Right ventricle myocardium inferior (tissue), 1 donor: ENCODE measurements at regions of chr13 and their contacts with region 1.

Region 1: DNA sequence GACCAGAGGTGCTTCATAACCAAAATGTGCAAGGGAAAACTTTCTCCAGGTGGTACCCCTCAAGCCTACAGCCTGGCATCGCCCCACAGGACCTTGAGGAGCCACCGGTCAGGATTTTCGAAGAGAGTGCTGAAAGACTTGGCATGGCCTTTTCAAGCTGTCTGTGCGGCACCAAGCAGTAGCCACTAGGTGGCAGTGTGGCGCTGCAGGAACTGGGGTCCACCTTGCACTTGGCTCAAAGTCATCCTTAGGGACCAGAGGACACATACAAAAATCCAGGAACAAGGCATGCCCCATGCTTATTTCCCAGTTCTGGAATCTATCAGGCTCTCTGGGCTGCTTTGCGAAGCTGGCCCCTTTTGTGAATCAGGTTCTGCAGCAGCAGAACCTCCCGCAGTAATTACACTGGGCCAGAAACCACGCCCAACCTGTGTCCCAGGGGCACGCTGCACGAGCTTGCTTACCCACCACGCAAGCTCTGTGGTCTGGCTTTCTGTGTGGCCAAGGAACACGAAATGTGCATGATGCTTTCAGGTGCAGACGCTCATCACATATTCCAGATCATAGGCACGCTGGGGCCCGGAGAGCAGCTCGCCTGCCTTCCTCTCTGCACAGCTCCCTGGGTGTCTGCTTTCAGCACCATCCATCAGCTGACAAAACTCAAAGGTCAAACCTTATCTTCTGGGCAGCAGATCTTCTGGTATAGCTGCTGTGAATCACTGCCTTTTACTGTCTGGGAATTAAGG is 87.2 kb downstream of the SLC7A1 start:
- DNase-seq: peak; percentile 90
- ATAC-seq: peak; percentile 87

Region 2: DNA sequence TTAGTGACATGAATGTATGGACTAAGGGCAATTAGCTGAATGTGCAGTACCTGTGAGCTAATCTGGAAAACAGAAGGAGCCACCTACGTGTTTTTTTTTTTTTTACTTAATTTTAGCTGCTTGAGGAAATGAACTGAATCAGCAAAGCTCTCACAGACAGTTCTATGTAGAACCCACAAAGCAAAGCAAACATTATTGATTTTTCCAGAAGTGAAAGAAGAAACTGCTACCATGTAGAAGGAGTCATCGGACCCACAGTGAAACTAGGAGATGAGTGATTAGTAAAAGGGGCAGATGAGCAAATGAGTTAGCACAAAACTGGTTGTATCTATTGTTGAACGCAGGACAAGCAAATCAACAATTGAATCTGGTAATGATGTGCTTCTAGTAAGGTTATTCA is 181.2 kb after region 1 on chr13:
- intact Hi-C with region 1: loop called (anchors 5 kb)
- DNase-seq: no peak
- ATAC-seq: no peak

Region 3: DNA sequence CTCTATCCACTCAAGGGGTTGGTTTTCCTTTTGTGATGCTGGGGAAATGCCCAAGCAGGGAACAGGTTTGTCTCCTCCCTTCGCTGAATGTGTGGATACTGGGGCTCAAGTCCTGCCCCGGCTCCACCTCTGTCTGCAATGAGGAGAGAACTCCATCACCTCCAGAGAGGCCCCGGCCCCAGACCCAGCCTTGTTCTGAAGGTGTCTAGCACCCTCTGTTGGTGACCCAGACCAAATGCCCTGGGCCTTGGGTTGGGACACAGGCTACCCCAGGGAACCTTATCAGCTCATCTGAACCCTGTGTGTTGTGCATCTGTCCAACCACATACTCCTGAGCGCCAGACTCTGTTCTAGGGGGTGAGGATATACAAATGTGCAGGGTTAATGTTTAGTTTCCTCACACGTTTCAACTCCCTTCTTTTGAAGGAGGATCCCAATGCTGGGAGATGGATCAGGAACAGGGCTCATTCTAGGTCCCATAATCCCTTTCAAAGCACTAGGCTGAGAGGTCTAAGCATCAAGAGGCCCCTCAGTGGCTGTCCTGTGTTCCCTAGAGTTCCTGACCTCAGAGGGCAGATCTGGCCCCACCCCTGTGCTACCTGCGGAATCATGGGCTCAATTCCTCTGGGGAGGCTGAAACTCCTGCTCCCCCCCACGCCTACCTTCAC is 199.7 kb after region 1 on chr13:
- intact Hi-C with region 1: loop called (anchors 1 kb)
- DNase-seq: peak; percentile 67
- ATAC-seq: peak; percentile 42

Region 4: DNA sequence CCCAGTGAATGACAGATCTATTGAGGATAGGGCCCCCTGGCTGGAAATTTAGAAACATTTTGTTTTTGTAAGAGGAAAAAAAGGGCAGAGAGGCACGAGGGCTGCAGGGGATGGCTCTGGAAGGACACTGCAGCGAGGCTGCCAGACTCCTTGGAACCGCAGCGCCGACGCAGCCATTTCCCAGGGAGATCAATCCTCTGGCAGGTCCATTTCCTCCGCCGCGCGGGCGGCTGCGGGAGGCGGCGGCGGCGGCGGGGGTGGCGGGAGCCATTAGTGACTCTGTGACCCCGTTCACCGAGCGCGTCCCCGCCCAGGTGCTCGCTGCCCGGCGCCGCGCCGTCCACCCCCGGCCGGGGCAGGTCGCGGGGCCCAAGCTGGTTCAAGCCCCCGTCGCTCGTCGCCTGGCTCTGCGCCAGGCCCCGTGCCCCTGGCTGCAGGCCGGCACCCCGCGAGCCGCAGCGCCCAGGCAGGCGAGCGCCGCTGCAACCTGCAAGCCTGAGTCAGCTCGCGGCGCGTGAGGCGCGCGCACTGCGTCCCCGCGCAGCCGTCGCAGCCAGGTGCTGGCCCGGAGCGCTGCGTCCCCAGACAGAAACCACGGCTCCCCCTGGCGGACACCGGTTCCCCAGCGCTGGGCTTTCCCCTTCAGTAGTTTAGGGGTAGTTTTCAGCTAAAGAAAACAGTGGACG is 606.4 kb after region 1 on chr13:
- intact Hi-C with region 1: loop called (anchors 1 kb)
- DNase-seq: peak; percentile 93
- ATAC-seq: peak; percentile 86